CD4-positive, alpha-beta memory T cell (primary cell): ENCODE measurements at regions of chr13 and their contacts with region 1.

Region 1: DNA sequence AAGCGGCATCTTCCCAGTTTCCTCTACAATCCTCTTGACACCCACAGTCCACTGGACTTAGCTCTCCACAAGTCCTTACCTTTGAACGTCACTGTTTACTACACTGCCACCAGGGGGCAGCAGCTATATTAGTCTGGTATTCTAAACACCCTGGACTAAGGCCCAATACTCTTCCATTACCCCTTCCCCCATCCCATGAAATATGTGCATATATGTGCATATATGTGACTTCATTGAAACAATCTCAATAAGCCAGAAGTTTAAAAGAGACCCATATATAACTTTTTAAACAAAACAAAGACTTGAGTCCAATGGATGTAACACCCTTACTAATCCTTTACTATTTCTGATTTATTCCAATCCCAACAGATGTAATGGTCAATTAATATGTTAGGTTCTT is 15.5 kb downstream of the GGACT start:
- DNase-seq: peak; percentile 61 to 76 (median 68)
- H3K4me3 ChIP-seq: no peak overlapping the region
- H3K4me3 Mint-ChIP-seq: no peak overlapping the region
- H3K27ac ChIP-seq: no peak overlapping the region
- H3K27ac Mint-ChIP-seq: no peak overlapping the region
- H3K4me1 ChIP-seq: peaks cover 11% of the 10 kb centered on the region
- H3K4me1 Mint-ChIP-seq: peaks cover 12 to 28% (median 16%) of the 10 kb centered on the region in 4 donors
- H3K27me3 ChIP-seq: no peaks in the 10 kb centered on the region
- H3K27me3 Mint-ChIP-seq: no peaks in the 10 kb centered on the region

Region 2: GRCh38 chr13:100560498-100561157 is 12.5 kb before region 1 on chr13:
- CTCF ChIA-PET with region 1: interaction called, 35 read pairs
- POLR2A ChIA-PET with region 1: no interaction called
- intact Hi-C with region 1: no loop called
- DNase-seq: no peak
- H3K4me3 ChIP-seq: no peak overlapping the region
- H3K4me3 Mint-ChIP-seq: no peak overlapping the region
- H3K27ac ChIP-seq: no peak overlapping the region
- H3K27ac Mint-ChIP-seq: no peak overlapping the region
- H3K4me1 ChIP-seq: no peaks in the 10 kb centered on the region
- H3K4me1 Mint-ChIP-seq: peaks cover 0 to 3% (median 3%) of the 10 kb centered on the region in 4 donors
- H3K27me3 ChIP-seq: no peaks in the 10 kb centered on the region
- H3K27me3 Mint-ChIP-seq: no peaks in the 10 kb centered on the region

Region 3: DNA sequence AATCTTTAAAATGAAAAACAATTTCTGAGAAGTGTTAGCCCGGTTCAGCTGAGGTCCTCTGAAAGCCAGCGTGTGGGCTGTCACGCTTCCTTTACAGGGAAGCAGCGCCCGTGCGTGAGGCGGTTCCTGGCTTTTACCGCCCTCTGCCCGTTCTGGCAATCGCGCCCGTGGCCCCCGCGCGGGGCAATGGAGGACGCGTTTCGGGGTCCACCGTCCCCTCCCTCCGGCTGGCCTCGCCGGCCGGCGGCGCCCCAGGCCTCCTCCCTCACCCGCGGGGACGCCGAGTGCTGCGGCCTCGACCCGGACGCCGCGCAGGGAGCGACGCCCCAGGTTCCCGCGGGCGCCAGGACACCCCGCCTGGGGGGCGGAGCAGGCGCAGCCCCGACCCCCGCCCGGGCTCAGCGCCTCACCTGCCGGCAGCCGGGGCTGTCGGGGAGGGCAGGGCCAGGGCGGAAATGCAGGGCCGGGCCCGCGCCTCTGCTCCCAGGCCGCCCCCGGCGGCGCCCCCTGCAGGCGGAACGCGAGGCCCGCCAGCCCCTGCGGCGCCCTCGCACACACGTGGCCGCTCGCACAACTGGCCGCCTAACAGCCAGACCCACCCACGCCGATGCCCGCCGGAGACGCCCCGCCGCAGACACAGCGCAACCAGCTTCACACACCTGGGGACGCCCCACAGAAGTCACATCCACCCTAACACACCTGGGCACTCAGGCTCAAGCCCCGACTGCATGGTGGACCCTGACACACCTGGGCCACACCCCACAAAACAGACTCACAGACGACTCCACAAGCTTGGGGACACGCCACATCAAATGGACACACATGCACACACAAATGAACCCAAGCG is 15.4 kb after region 1 on chr13 and contains the start of gene GGACT:
- CTCF ChIA-PET with region 1: interaction called, 182 read pairs
- POLR2A ChIA-PET with region 1: interaction called, 22 read pairs
- intact Hi-C with region 1: loop called (anchors 1 kb)
- DNase-seq: peak; percentile 77 to 87 (median 83)
- H3K4me3 ChIP-seq: peak within 1 kb of the TSS; percentile 57 to 77
- H3K4me3 Mint-ChIP-seq: peak within 1 kb of the TSS; percentile 82 to 90 (median 86)
- H3K27ac ChIP-seq: peak within 1 kb of the TSS; percentile 74
- H3K27ac Mint-ChIP-seq: peak within 1 kb of the TSS; percentile 83 to 95 (median 91)
- H3K4me1 ChIP-seq: peaks cover 42% of the 10 kb centered on the region
- H3K4me1 Mint-ChIP-seq: peaks cover 34 to 50% (median 41%) of the 10 kb centered on the region in 4 donors
- H3K27me3 ChIP-seq: no peaks in the 10 kb centered on the region
- H3K27me3 Mint-ChIP-seq: no peaks in the 10 kb centered on the region
- total RNA-seq, gene GGACT: 6.7 to 9.6 TPM

Region 4: GRCh38 chr13:100630555-100630954 is 57.4 kb after region 1 on chr13:
- CTCF ChIA-PET with region 1: interaction called, 11 read pairs
- POLR2A ChIA-PET with region 1: no interaction called
- intact Hi-C with region 1: no loop called
- DNase-seq: no peak
- H3K4me3 ChIP-seq: no peak overlapping the region
- H3K4me3 Mint-ChIP-seq: no peak overlapping the region
- H3K27ac ChIP-seq: no peak overlapping the region
- H3K27ac Mint-ChIP-seq: no peak overlapping the region
- H3K4me1 ChIP-seq: no peaks in the 10 kb centered on the region
- H3K4me1 Mint-ChIP-seq: peaks cover 0 to 2% (median 0%) of the 10 kb centered on the region in 4 donors
- H3K27me3 ChIP-seq: no peaks in the 10 kb centered on the region
- H3K27me3 Mint-ChIP-seq: no peaks in the 10 kb centered on the region

Region 5: GRCh38 chr13:101127741-101128353 is 554.7 kb after region 1 on chr13:
- CTCF ChIA-PET with region 1: interaction called, 54 read pairs
- POLR2A ChIA-PET with region 1: interaction called, 3 read pairs
- intact Hi-C with region 1: loop called (anchors 1 kb)
- DNase-seq: peak in 4 of 5 donors; percentile 17 to 41 (median 26)
- H3K4me3 ChIP-seq: no peak overlapping the region
- H3K4me3 Mint-ChIP-seq: no peak overlapping the region
- H3K27ac ChIP-seq: no peak overlapping the region
- H3K27ac Mint-ChIP-seq: no peak overlapping the region
- H3K4me1 ChIP-seq: no peaks in the 10 kb centered on the region
- H3K4me1 Mint-ChIP-seq: peaks cover 0 to 3% (median 1%) of the 10 kb centered on the region in 4 donors
- H3K27me3 ChIP-seq: no peaks in the 10 kb centered on the region
- H3K27me3 Mint-ChIP-seq: peaks cover 2 to 3% of the 10 kb centered on the region in 2 donors